ENCODE measurements at regions of chr9 and their contacts with region 1.

Region 1: DNA sequence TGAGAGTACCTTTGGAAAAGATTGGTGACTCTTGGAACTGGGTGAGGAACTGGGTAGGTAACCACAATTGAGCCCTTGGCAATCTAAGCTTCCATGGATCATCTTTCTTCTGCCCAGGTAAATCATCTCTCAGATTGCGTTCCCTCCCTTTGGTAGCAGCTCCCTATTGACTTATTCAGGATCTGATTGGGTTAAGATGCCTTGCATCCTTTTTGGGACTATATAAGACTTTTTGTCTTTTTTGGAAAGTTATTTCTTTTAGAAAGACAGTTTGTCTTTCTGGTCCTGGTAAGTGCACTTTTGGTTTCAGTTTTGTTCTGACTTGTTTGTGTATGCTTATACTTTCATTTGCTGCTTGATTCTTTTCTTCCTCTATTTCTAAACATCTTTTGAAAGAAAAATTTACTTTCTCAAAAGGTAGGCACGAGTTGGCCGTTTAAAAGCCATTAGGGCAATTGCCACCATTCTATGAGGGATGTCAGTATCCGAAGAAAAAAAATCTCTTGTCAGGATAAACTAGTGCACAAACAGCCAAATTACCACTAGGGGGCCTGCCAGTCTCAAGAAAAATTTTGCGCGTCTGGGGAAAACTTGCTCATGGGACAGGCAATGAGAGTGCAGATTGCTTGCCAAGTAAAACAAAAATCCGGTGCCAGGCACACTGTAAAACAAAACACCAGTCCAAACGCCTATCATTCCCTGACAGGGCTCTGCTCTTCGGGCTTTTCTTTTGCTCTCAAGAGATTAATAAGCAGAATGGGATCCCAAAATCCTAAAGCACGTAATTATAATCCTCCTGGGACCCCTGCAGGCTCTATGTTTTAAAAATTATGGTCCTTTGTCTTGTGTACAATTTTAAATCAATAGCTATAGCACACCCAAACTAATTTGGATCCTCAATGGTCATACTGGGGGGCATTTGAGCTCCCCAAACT is 12.8 kb downstream of the OR1J1 start:
- DNase-seq: peak; percentile 22 to 73 (median 53)
- H3K4me3 ChIP-seq: peak overlapping the region; percentile 53
- H3K4me3 Mint-ChIP-seq: peak overlapping the region; percentile 86 to 95 (median 91)
- H3K27ac ChIP-seq: peak overlapping the region; percentile 26
- H3K27ac Mint-ChIP-seq: peak overlapping the region; percentile 63 to 91 (median 84)
- H3K4me1 ChIP-seq: peaks cover 4% of the 10 kb centered on the region
- H3K4me1 Mint-ChIP-seq: peaks cover 6 to 17% (median 12%) of the 10 kb centered on the region in 3 donors
- H3K27me3 ChIP-seq: no peaks in the 10 kb centered on the region
- H3K27me3 Mint-ChIP-seq: peaks cover 28 to 50% of the 10 kb centered on the region in 2 donors

Region 2: GRCh38 chr9:122360891-122361290 is 104.0 kb before region 1 on chr9:
- CTCF ChIA-PET with region 1: no interaction called
- POLR2A ChIA-PET with region 1: no interaction called
- DNase-seq: no peak
- H3K4me3 ChIP-seq: no peak overlapping the region
- H3K4me3 Mint-ChIP-seq: no peak overlapping the region
- H3K27ac ChIP-seq: no peak overlapping the region
- H3K27ac Mint-ChIP-seq: no peak overlapping the region
- H3K4me1 ChIP-seq: no peaks in the 10 kb centered on the region
- H3K4me1 Mint-ChIP-seq: no peaks in the 10 kb centered on the region
- H3K27me3 ChIP-seq: no peaks in the 10 kb centered on the region
- H3K27me3 Mint-ChIP-seq: peaks cover 12 to 14% of the 10 kb centered on the region in 2 donors

Region 3: GRCh38 chr9:122526600-122526999 is 61.7 kb after region 1 on chr9:
- CTCF ChIA-PET with region 1: no interaction called
- POLR2A ChIA-PET with region 1: no interaction called
- DNase-seq: no peak
- H3K4me3 ChIP-seq: no peak overlapping the region
- H3K4me3 Mint-ChIP-seq: no peak overlapping the region
- H3K27ac ChIP-seq: no peak overlapping the region
- H3K27ac Mint-ChIP-seq: no peak overlapping the region
- H3K4me1 ChIP-seq: no peaks in the 10 kb centered on the region
- H3K4me1 Mint-ChIP-seq: no peaks in the 10 kb centered on the region
- H3K27me3 ChIP-seq: no peaks in the 10 kb centered on the region
- H3K27me3 Mint-ChIP-seq: peaks cover 10 to 31% of the 10 kb centered on the region in 2 donors

Region 4: DNA sequence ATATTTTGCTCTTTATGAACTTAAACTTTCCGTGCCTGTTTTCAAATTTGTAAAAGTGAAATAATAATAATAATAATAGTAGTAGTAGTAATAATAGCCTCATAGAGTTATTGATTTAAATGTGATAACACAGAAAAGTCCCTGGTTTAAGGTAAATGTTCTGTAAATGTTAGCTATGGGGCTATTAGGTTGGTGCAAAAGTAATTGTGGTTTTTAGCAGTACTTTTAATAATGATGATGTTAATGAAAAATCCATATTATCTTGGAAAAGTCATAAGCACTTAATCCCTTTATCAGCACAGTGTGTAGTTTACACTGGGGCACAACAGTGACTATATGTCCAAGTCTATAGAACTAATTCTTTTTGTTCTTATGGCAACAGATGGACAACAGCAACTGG is 149.5 kb after region 1 on chr9 and contains the start of gene OR1Q1:
- CTCF ChIA-PET with region 1: no interaction called
- POLR2A ChIA-PET with region 1: no interaction called
- DNase-seq: no peak
- H3K4me3 ChIP-seq: no peak within 1 kb of the TSS
- H3K4me3 Mint-ChIP-seq: no peak within 1 kb of the TSS
- H3K27ac ChIP-seq: no peak within 1 kb of the TSS
- H3K27ac Mint-ChIP-seq: no peak within 1 kb of the TSS
- H3K4me1 ChIP-seq: no peaks in the 10 kb centered on the region
- H3K4me1 Mint-ChIP-seq: no peaks in the 10 kb centered on the region
- H3K27me3 ChIP-seq: peaks cover 5% of the 10 kb centered on the region
- H3K27me3 Mint-ChIP-seq: peaks cover 13 to 19% of the 10 kb centered on the region in 2 donors
- total RNA-seq, gene OR1Q1: not detected

Region 5: DNA sequence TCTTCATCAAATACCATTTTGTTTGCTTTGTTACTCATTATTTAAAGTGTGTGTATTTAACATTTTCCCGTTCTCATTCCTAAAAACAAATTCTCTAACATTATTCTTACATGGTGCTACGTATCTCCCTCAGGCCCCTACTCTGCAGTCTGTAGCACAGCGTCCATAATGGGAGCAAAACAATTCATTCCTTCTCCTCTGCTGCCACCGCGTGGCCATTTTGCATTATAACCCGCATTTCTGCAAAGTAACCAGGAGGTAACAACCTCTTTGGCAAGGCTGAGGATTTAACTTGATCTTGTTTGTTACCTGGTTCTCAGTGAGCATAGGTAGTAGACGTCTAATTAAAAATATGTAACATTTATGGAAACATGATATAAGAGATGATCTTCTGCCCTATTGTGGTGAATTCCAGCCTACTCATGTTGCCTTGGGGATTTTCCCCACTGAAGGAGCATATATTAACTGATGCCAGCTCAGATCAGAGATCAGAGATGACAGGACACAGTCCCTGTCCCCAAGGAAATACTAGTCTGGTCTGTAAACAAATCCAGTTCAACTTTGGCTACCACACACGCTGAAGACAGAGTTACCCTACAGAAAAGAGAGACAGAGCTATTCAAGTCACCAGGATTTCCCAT is 345.5 kb after region 1 on chr9:
- CTCF ChIA-PET with region 1: interaction called, 33 read pairs
- POLR2A ChIA-PET with region 1: no interaction called
- DNase-seq: peak; percentile 57 to 79 (median 58)
- H3K4me3 ChIP-seq: no peak overlapping the region
- H3K4me3 Mint-ChIP-seq: no peak overlapping the region
- H3K27ac ChIP-seq: no peak overlapping the region
- H3K27ac Mint-ChIP-seq: no peak overlapping the region
- H3K4me1 ChIP-seq: peaks cover 6% of the 10 kb centered on the region
- H3K4me1 Mint-ChIP-seq: peaks cover 15 to 29% (median 21%) of the 10 kb centered on the region in 3 donors
- H3K27me3 ChIP-seq: no peaks in the 10 kb centered on the region
- H3K27me3 Mint-ChIP-seq: no peaks in the 10 kb centered on the region